Dendritic cell treated with granulocyte-macrophage colony-stimulating factor and Interleukin-4, amounts not matched to agents 40 ng/mL and 50 ng/mL, for 4 days (primary cell): ENCODE measurements at regions of chr2 and their contacts with region 1.

Region 1: GRCh38 chr2:64914735-64915509 is 74.3 kb upstream of the SLC1A4 start:
- H3K4me3 Mint-ChIP-seq: no peak overlapping the region
- H3K27ac Mint-ChIP-seq: no peak overlapping the region
- H3K4me1 Mint-ChIP-seq: peaks cover 24% of the 10 kb centered on the region
- H3K27me3 Mint-ChIP-seq: no peaks in the 10 kb centered on the region

Region 2: DNA sequence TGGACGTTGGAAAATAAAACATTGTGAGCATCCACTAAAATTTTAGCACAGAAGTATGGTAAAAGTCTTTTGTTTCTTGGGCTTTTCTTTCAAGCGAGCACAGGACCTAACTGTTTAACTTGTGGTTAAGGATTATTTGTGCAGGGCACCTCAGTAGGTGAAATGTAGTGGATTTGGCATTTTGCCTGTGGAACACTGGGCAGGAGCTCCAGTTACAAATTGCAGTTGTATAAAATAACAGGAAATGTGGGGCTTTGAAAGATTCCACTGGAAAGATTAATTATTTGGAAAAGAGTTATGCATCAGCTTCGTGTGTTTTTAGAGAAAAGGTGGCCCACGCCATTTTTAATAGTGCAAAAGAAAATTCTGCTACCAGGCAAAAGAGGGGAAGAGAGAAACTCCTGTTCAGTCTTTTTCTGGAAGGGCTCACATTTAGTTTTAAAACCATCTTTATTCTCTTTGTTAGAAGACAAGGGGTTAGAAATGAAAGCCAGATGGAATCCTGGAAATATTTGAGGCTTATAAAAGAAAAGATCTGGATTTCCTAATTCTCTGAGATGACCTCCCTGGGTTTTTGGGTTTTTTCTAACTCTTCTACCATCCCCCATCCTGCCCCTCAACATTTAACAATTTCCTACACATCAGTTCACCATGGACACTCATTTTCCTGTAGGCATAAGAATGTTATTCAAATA is 116.9 kb before region 1 on chr2:
- intact Hi-C with region 1: no loop called
- H3K4me3 Mint-ChIP-seq: no peak overlapping the region
- H3K27ac Mint-ChIP-seq: no peak overlapping the region
- H3K4me1 Mint-ChIP-seq: peaks cover 5% of the 10 kb centered on the region
- H3K27me3 Mint-ChIP-seq: no peaks in the 10 kb centered on the region

Region 3: DNA sequence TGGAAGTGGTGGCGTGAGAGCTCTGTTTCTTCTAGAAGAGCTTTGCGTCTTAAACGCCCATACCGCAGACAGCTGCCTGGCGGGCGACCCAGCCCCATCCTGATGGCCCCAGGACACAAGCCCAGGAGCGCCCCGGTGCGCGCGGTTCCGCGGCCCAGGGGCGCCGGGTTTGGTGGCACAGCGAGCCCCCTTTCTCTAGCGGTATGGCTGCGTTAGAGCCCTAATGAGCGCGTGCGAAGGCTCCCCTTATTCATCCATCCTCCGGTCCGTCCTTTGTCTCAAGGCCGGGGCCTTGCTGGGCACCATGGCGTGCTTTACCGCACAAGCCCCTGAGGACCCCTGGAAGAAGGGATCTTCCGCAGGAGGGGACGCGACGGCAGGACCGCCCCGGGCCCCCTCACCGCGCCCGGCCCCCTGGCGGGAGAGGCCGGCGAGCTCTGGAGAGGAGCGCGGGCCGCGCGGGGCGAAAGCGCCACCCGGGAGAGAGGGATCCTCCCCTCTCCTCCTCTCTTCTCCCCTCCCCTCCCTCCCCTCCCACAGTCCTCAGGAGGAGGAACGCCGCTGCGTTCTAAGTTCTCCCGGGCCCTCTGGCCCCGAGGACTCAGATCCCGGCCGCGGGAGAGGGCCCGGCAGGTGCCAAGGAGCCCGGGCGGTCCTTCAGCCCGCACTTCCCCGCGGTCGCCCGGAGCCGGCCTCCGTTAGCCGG is 73.7 kb after region 1 on chr2:
- intact Hi-C with region 1: loop called (anchors 5 kb)
- H3K4me3 Mint-ChIP-seq: peak overlapping the region; percentile 80
- H3K27ac Mint-ChIP-seq: peak overlapping the region; percentile 75
- H3K4me1 Mint-ChIP-seq: peaks cover 64% of the 10 kb centered on the region
- H3K27me3 Mint-ChIP-seq: peaks cover 4% of the 10 kb centered on the region

Region 4: GRCh38 chr2:65040400-65041261 is 125.7 kb after region 1 on chr2:
- intact Hi-C with region 1: loop called (anchors 1 kb)
- H3K4me3 Mint-ChIP-seq: peak overlapping the region; percentile 50
- H3K27ac Mint-ChIP-seq: no peak overlapping the region
- H3K4me1 Mint-ChIP-seq: peaks cover 12% of the 10 kb centered on the region
- H3K27me3 Mint-ChIP-seq: no peaks in the 10 kb centered on the region

Region 5: DNA sequence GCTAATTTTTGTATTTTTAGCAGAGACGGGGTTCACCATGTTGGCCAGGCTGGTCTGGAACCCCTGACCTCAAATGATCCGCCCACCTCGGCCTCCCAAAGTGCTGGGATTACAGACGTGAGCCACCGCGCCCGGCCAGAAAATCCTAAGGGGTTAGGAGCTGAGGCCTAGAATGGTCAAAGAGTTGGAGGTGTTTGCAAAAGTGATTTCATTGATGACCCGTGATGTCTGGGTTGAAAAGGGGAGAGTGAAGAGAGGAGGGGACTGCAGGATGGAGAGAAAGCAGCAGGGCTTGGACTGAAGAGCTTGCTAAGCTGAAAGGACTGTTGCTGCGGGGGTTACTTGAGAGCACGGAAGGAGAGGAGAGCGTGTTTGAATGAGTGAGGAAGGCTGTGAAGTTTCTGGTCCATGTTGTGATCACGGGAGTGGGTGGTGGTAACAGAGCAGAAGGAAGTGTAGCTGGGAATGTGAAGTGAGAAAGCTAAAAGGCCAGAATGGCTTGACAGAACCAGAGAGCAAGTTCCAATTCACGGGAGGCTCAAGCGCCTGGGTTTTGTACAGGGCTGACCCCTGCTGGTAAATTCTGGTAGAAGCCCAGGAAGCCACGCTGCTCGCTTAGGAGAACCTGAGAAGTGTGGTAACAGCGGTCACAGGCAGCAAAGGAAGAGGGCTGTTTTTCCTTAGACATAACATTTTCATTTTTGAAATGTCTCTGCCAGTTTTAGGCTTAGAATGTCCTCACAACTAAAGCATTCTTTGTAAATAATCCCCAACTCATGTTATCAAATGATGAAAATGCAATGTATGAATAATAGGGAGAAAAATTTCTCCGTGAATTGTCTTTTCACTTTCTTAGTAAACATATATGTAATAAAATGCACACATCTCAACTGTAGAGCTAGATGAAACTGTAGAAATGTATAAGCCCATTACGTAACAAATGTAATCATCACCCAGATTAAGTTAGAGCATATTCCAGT is 272.2 kb after region 1 on chr2:
- intact Hi-C with region 1: loop called (anchors 5 kb)
- H3K4me3 Mint-ChIP-seq: no peak overlapping the region
- H3K27ac Mint-ChIP-seq: peak overlapping the region; percentile 4
- H3K4me1 Mint-ChIP-seq: peaks cover 11% of the 10 kb centered on the region
- H3K27me3 Mint-ChIP-seq: peaks cover 7% of the 10 kb centered on the region

Region 6: DNA sequence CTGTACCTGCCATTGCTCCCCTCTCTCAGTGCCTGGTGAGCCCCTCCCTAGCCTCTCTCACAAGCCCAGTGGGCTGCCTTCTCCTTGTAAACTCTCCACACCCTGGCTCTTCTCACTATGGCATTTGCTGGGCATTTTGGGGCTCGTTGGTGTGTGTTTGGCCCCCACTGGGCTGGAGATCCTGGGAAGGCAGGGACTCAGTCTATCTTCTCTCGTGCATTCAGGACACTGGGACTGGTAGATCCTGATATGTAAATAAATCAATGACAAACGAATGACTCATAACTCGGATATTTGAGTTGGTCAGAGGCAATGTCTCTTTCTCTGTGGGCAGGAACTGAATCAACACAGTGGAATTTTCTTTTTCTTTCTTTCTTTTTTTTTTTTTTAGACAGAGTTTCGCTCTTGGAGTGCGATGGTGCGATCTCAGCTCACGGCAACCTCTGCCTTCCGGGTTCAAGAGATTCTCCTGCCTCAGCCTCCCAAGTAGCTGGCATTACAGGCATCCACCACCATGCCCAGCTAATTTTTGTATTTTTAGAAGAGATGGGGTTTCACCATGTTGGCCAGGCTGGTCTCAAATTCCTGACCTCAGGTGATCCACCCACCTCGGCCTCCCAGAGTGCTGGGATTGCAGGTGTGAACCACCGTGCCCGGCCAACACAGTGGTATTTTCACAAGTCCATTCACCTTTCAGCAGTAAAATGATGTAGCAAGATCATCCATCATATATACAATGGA is 662.1 kb after region 1 on chr2:
- intact Hi-C with region 1: loop called (anchors 5 kb)
- H3K4me3 Mint-ChIP-seq: no peak overlapping the region
- H3K27ac Mint-ChIP-seq: no peak overlapping the region
- H3K4me1 Mint-ChIP-seq: peaks cover 12% of the 10 kb centered on the region
- H3K27me3 Mint-ChIP-seq: peaks cover 10% of the 10 kb centered on the region